ENCODE measurements at regions of chr1 and their contacts with region 1.

Region 1: GRCh38 chr1:3453203-3453761 is 1.2 kb upstream of the ARHGEF16 start:
- DNase-seq: peak; percentile 86
- H3K4me3 Mint-ChIP-seq: peak overlapping the region; percentile 72
- H3K27ac Mint-ChIP-seq: no peak overlapping the region
- H3K4me1 Mint-ChIP-seq: peaks cover 11% of the 10 kb centered on the region
- H3K27me3 Mint-ChIP-seq: peaks cover 18% of the 10 kb centered on the region
- CTCF ChIP-seq: peak; percentile 84

Region 2: DNA sequence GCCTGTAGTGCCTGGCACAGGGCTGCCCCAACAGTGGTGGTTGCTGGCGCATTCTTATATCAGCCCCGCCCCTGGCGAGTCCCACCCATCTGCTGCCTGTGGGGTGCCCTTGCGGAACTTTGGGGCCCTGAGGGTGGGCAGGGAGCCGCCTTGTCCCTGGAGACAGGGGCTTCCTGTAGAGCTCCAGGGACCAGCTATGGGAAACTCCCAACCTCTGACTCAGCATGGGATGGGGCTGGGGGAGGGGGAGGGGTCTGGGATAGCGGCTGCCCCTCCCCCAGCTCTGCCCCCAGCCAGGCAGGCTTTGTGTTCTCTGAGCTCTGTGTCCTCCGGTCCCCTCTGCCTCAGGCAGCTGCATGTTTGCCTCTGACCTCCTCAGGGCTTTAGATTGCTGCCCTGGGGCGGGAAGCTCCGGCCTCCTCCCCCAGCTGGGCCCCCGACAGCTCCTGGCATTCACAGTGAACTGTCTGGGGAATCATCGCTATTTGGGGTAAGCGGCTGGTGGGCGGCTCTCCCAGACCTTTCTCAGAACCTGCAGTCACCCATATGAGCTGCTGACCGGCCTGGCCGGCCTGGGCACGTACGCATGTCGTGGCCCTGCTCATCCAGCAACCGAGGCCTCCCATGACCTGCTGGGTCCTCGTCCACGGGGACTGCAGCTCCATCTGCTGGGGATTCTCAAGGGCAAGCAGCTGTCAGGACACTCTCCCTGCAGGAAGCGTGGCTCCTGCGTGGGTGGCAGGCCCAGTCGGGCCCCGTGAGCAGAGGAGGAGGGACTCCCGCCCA is 18.2 kb after region 1 on chr1:
- CTCF ChIA-PET with region 1: interaction called, 17 read pairs
- intact Hi-C with region 1: no loop called
- DNase-seq: no peak
- H3K4me3 Mint-ChIP-seq: no peak overlapping the region
- H3K27ac Mint-ChIP-seq: no peak overlapping the region
- H3K4me1 Mint-ChIP-seq: no peaks in the 10 kb centered on the region
- H3K27me3 Mint-ChIP-seq: no peaks in the 10 kb centered on the region
- CTCF ChIP-seq: no peak

Region 3: DNA sequence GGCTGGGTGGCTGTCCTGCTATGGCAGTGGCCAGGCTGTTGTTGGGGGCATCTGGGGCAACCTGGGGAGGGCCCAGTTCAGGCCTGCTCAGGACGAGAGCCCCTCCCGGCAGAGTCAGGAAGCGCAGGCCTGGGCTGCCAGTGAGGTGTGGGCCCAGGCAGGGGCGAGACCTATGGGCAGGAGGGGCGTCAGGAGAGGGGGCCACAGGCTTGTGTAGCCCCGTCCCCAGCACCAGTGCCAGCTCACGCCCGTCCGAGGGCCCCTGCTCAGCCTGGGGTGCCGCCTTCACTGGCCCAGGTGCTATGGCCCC is 29.3 kb after region 1 on chr1:
- CTCF ChIA-PET with region 1: interaction called, 15 read pairs
- intact Hi-C with region 1: loop called (anchors 1 kb)
- DNase-seq: no peak
- H3K4me3 Mint-ChIP-seq: no peak overlapping the region
- H3K27ac Mint-ChIP-seq: no peak overlapping the region
- H3K4me1 Mint-ChIP-seq: peaks cover 9% of the 10 kb centered on the region
- H3K27me3 Mint-ChIP-seq: no peaks in the 10 kb centered on the region
- CTCF ChIP-seq: peak; percentile 38

Region 4: GRCh38 chr1:3543076-3544039 is 90.1 kb after region 1 on chr1:
- CTCF ChIA-PET with region 1: no interaction called
- intact Hi-C with region 1: no loop called
- DNase-seq: no peak
- H3K4me3 Mint-ChIP-seq: no peak overlapping the region
- H3K27ac Mint-ChIP-seq: no peak overlapping the region
- H3K4me1 Mint-ChIP-seq: no peaks in the 10 kb centered on the region
- H3K27me3 Mint-ChIP-seq: no peaks in the 10 kb centered on the region
- CTCF ChIP-seq: no peak